ENCODE measurements at regions of chr9 and their contacts with region 1.

Region 1: DNA sequence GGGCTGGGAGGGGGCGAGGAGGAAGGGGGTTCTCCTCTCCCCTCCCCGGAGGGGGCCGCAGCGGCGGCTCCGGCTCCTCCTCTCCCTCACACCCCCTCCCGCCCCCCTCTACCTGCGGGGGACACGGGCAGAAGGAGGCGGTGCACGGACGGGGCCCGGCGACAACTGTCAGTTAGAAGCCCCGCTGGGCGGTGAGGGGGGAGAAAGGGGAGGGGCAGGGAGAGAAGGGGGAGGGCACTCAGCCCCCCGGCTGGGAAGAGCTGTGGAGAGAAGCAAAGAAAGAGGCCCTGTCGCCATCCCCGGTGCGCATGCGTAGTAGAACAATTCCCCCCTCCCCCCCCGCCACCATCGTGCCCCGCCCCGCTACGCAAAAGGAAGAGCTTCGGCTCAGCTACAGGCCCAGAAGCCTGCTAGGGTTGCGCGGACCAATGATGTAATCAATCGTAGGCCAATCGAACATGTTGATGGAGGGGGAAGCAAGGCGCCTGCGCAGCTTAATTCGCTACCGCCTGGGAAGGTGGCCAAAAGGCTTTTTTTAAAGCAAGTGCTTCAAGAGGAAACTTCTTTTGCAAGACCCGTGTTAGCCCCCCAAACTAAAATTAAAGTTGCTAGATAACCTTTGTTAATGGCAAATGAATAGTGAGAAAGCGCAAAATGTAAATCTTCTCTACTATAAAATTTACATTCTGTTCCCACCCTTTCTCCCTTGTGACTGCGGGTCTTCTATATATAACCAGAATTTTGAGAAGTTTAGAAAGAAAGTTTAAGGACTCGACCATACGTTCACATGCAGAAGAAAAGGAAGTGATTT is 7.0 kb downstream of the RANBP6 start:
- DNase-seq: peak; percentile 97
- ATAC-seq: peak; percentile 72
- H3K4me3 ChIP-seq: peak overlapping the region; percentile 43 to 89 (median 73)
- H3K4me3 Mint-ChIP-seq: peak overlapping the region; percentile 95
- H3K27ac ChIP-seq: peak overlapping the region; percentile 86 to 91
- H3K27ac Mint-ChIP-seq: peak overlapping the region; percentile 89
- H3K4me1 ChIP-seq: peaks cover 17 to 21% of the 10 kb centered on the region in 2 donors
- H3K4me1 Mint-ChIP-seq: peaks cover 49% of the 10 kb centered on the region
- H3K27me3 ChIP-seq: no peaks in the 10 kb centered on the region
- H3K27me3 Mint-ChIP-seq: no peaks in the 10 kb centered on the region
- CTCF ChIP-seq: no peak

Region 2: GRCh38 chr9:4679268-4680172 is 1328.9 kb before region 1 on chr9 and contains the start of gene CDC37L1:
- CTCF ChIA-PET with region 1: no interaction called
- POLR2A ChIA-PET with region 1: interaction called, 3 read pairs
- intact Hi-C with region 1: loop called (anchors 5 kb)
- DNase-seq: peak; percentile 98
- ATAC-seq: peak; percentile 95
- H3K4me3 ChIP-seq: peak within 1 kb of the TSS; percentile 58 to 97 (median 72)
- H3K4me3 Mint-ChIP-seq: no peak within 1 kb of the TSS
- H3K27ac ChIP-seq: peak within 1 kb of the TSS; percentile 89 to 93
- H3K27ac Mint-ChIP-seq: no peak within 1 kb of the TSS
- H3K4me1 ChIP-seq: peaks cover 17 to 20% of the 10 kb centered on the region in 2 donors
- H3K4me1 Mint-ChIP-seq: peaks cover 3% of the 10 kb centered on the region
- H3K27me3 ChIP-seq: no peaks in the 10 kb centered on the region
- H3K27me3 Mint-ChIP-seq: no peaks in the 10 kb centered on the region
- CTCF ChIP-seq: peak; percentile 72
- total RNA-seq, gene CDC37L1: 16.0 and 19.3 TPM in 2 replicates

Region 3: GRCh38 chr9:5832543-5833529 is 175.5 kb before region 1 on chr9 and contains the start of gene ERMP1:
- CTCF ChIA-PET with region 1: no interaction called
- POLR2A ChIA-PET with region 1: interaction called, 3 read pairs
- intact Hi-C with region 1: loop called (anchors 2 kb)
- DNase-seq: peak; percentile 93
- ATAC-seq: peak; percentile 89
- H3K4me3 ChIP-seq: peak within 1 kb of the TSS; percentile 63 to 83 (median 75)
- H3K4me3 Mint-ChIP-seq: peak within 1 kb of the TSS; percentile 95
- H3K27ac ChIP-seq: peak within 1 kb of the TSS in 1 of 2 donors; percentile 50
- H3K27ac Mint-ChIP-seq: peak within 1 kb of the TSS; percentile 93
- H3K4me1 ChIP-seq: peaks cover 19 to 25% of the 10 kb centered on the region in 2 donors
- H3K4me1 Mint-ChIP-seq: peaks cover 37% of the 10 kb centered on the region
- H3K27me3 ChIP-seq: no peaks in the 10 kb centered on the region
- H3K27me3 Mint-ChIP-seq: no peaks in the 10 kb centered on the region
- CTCF ChIP-seq: peak; percentile 96
- total RNA-seq, gene ERMP1: 10.6 and 12.8 TPM in 2 replicates

Region 4: GRCh38 chr9:6055213-6055612 is 46.8 kb after region 1 on chr9:
- CTCF ChIA-PET with region 1: interaction called, 12 read pairs
- POLR2A ChIA-PET with region 1: no interaction called
- intact Hi-C with region 1: loop called (anchors 2 kb)
- DNase-seq: peak; percentile 73
- ATAC-seq: peak; percentile 34
- H3K4me3 ChIP-seq: no peak overlapping the region
- H3K4me3 Mint-ChIP-seq: no peak overlapping the region
- H3K27ac ChIP-seq: no peak overlapping the region
- H3K27ac Mint-ChIP-seq: no peak overlapping the region
- H3K4me1 ChIP-seq: peaks cover 11 to 20% of the 10 kb centered on the region in 2 donors
- H3K4me1 Mint-ChIP-seq: peaks cover 18% of the 10 kb centered on the region
- H3K27me3 ChIP-seq: no peaks in the 10 kb centered on the region
- H3K27me3 Mint-ChIP-seq: no peaks in the 10 kb centered on the region
- CTCF ChIP-seq: peak; percentile 37

Region 5: GRCh38 chr9:6412487-6413364 is 404.4 kb after region 1 on chr9 and contains the start of gene UHRF2:
- CTCF ChIA-PET with region 1: no interaction called
- POLR2A ChIA-PET with region 1: interaction called, 3 read pairs
- intact Hi-C with region 1: loop called (anchors 2 kb)
- DNase-seq: peak; percentile 100
- ATAC-seq: peak; percentile 87
- H3K4me3 ChIP-seq: peak within 1 kb of the TSS; percentile 72 to 89 (median 87)
- H3K4me3 Mint-ChIP-seq: peak within 1 kb of the TSS; percentile 88
- H3K27ac ChIP-seq: peak within 1 kb of the TSS; percentile 95 to 97
- H3K27ac Mint-ChIP-seq: peak within 1 kb of the TSS; percentile 98
- H3K4me1 ChIP-seq: peaks cover 61 to 62% of the 10 kb centered on the region in 2 donors
- H3K4me1 Mint-ChIP-seq: peaks cover 58% of the 10 kb centered on the region
- H3K27me3 ChIP-seq: no peaks in the 10 kb centered on the region
- H3K27me3 Mint-ChIP-seq: no peaks in the 10 kb centered on the region
- CTCF ChIP-seq: no peak
- total RNA-seq, gene UHRF2: 153 and 171 TPM in 2 replicates

Measured in B cell (primary cell).